Sciatic nerve (tissue), 2 donors: ENCODE measurements at regions of chr18 and their contacts with region 1.

Region 1: GRCh38 chr18:3715231-3716080 is 265.5 kb downstream of the TGIF1 start:
- DNase-seq: no peak
- ATAC-seq: no peak

Region 2: DNA sequence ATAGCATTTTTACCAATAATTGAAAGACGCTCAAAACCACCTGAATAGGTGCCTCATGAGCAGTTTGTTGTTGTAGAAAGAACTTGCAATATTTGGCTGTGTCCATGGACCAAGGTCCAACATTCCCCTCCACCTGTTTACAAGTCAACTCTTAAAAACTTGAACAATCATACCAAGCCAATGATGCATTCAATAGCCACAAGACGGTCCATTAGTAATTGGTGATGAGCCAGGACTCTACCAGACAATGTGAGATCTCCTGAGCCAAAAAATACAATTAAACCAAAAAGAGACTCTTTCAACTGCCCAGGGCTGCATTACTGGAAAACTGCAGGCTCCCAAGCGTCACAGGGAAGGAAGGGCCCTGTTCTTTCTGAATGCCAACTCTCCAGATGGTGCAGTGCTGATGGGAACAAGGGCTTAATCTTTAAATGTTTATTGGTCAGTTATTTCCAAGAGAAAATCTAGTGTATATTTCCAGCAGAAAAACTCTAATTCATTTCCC is 1947.2 kb after region 1 on chr18:
- intact Hi-C with region 1: loop called (anchors 5 kb)
- DNase-seq: no peak
- ATAC-seq: no peak